Activated CD8-positive, alpha-beta T cell treated with anti-CD3 and anti-CD28 coated beads for 36 hours (primary cell): ENCODE measurements at regions of chr17 and their contacts with region 1.

Region 1: GRCh38 chr17:10772425-10773380 is 31.2 kb downstream of the TMEM238L start:
- DNase-seq: peak; percentile 72
- ATAC-seq: no peak
- H3K4me3 Mint-ChIP-seq: no peak overlapping the region
- H3K27ac Mint-ChIP-seq: no peak overlapping the region
- H3K4me1 Mint-ChIP-seq: no peaks in the 10 kb centered on the region
- H3K27me3 Mint-ChIP-seq: peaks cover 2% of the 10 kb centered on the region
- CTCF ChIP-seq: peak; percentile 88

Region 2: DNA sequence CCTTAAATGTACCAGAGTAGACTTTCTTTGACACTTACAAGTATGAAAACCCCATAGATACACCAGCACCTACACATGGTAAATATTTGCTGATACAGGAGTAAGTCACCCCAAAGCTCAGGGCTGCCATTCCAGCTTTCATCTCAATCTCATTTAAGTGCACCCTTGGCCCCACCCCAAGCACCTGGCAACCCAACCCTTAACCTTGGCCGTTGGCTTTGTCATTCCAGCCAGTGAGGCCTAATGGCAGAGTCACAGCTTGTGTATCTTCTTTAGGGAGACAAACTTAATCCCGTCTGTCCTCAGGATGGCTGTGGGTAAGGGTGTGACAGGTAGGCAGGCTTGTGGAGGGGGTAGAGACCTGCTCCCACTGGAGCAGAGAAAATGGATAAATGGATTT is 11.4 kb before region 1 on chr17:
- CTCF ChIA-PET with region 1: interaction called, 13 read pairs
- POLR2A ChIA-PET with region 1: no interaction called
- intact Hi-C with region 1: no loop called
- DNase-seq: no peak
- ATAC-seq: no peak
- H3K4me3 Mint-ChIP-seq: no peak overlapping the region
- H3K27ac Mint-ChIP-seq: no peak overlapping the region
- H3K4me1 Mint-ChIP-seq: no peaks in the 10 kb centered on the region
- H3K27me3 Mint-ChIP-seq: no peaks in the 10 kb centered on the region
- CTCF ChIP-seq: no peak

Region 3: GRCh38 chr17:10844621-10845387 is 72.1 kb after region 1 on chr17:
- CTCF ChIA-PET with region 1: interaction called, 33 read pairs
- POLR2A ChIA-PET with region 1: no interaction called
- intact Hi-C with region 1: loop called (anchors 2 kb)
- DNase-seq: peak; percentile 77
- ATAC-seq: peak; percentile 99
- H3K4me3 Mint-ChIP-seq: peak overlapping the region; percentile 66
- H3K27ac Mint-ChIP-seq: no peak overlapping the region
- H3K4me1 Mint-ChIP-seq: peaks cover 7% of the 10 kb centered on the region
- H3K27me3 Mint-ChIP-seq: peaks cover under 1% of the 10 kb centered on the region
- CTCF ChIP-seq: peak; percentile 91